Common myeloid progenitor, CD34-positive (primary cell): ENCODE measurements at regions of chr6 and their contacts with region 1.

Region 1: DNA sequence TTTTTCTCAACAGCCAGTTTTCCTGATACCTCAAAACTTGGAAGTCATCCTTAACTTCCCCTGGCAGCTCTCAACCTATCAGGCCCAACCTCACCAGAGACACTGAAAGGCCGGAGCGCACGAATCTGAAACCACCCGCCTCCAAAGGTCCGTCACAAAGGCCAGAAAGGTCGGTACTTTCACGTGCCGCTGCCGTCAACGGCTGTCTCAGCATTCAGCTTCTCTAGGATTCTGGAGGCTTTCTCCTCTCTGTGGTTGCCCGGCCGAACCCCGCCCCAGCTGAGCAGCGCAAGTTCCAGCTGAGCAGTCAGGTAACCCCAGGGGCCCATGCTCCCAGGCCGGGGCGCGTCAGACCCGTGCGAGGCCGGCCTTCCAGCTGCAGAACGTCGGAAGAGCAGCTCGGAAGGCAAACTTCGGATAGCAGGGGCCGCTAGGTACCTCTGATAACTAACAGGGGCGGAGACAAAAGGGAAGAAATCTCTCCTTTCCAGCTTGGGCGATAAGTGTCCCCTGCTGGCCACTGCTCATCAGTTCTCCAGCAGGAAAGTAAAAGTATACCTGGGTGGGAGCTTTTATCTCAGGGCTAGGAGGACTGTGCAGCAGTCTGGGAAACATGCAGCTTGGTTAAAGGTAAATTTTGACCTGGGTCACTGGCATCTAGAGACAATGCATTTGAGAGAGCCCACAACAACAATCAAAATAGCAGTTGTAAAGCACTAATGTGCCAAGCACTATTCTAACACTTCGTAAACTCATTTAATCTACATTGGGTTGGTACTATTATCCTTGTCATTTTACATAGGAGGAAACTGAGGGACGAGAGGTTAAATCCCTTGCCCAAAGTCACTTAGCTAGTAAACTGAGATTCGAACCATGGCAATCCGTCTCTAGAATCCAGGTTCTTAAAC is 16.1 kb downstream of the ZSCAN12 start:
- DNase-seq: peak; percentile 86 to 91 (median 90)
- H3K4me3 ChIP-seq: peak overlapping the region; percentile 36 to 83 (median 73)
- H3K27ac ChIP-seq: peak overlapping the region; percentile 72 to 85
- H3K4me1 ChIP-seq: peaks cover 0 to 17% (median 8%) of the 10 kb centered on the region in 4 experiments
- H3K27me3 ChIP-seq: no peaks in the 10 kb centered on the region

Region 2: DNA sequence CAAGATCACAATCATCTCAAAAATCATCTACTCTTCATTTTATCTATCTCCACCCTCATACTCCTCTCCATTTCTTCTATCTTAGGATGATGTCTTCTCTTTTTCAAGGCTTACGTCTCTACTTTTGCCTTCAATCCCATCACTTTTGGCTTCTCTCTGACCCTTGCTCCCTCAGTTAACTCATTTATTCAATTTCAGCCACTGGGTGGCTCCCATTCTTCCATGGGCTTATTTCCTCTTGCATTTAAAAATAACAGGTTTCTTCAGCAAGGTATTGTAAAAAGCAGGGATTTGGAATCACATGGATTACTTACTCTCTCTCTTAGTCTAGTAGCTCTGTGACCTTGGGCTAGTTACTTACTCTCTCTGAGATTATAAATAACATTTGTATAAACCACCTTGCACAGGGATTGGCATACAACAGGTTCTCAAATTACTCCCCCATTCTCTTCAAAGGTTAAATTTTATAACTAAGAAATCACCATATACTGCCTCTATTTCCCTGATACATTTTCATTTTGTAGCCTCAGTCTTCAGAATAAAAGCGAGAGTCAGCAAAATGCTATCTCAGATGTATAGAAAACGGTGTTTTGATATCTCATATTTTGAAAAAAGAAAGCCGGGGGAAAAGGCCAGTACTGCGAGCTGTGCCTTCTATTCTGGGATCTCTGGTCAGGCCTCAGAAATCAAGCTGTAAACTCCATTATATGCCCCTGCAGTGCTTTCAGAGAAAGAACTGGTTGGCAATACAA is 10.6 kb after region 1 on chr6:
- CTCF ChIA-PET with region 1: interaction called, 17 read pairs
- POLR2A ChIA-PET with region 1: interaction called, 6 read pairs
- DNase-seq: peak in 2 of 3 donors; percentile 26
- H3K4me3 ChIP-seq: no peak overlapping the region
- H3K27ac ChIP-seq: no peak overlapping the region
- H3K4me1 ChIP-seq: peaks cover 3 to 14% (median 5%) of the 10 kb centered on the region in 4 experiments
- H3K27me3 ChIP-seq: no peaks in the 10 kb centered on the region